ENCODE measurements at regions of chr9 and their contacts with region 1.

Region 1: GRCh38 chr9:74309654-74310053 is 187.5 kb upstream of the RORB start:
- DNase-seq: no peak
- ATAC-seq: no peak
- H3K4me3 ChIP-seq: no peak overlapping the region
- H3K27ac ChIP-seq: no peak overlapping the region
- H3K4me1 ChIP-seq: no peaks in the 10 kb centered on the region
- H3K27me3 ChIP-seq: no peaks in the 10 kb centered on the region
- CTCF ChIP-seq: peak in 5 of 9 donors; percentile 11 to 35 (median 22)

Region 2: GRCh38 chr9:74570879-74571512 is 261.3 kb after region 1 on chr9:
- intact Hi-C with region 1: loop called in 3 of 10 experiments (anchors 2 to 10 kb)
- DNase-seq: no peak
- ATAC-seq: no peak
- H3K4me3 ChIP-seq: no peak overlapping the region
- H3K27ac ChIP-seq: no peak overlapping the region
- H3K4me1 ChIP-seq: peaks cover 0 to 4% (median 0%) of the 10 kb centered on the region in 9 donors
- H3K27me3 ChIP-seq: no peaks in the 10 kb centered on the region
- CTCF ChIP-seq: peak; percentile 41 to 72 (median 61)

Region 3: GRCh38 chr9:74577956-74578355 is 268.3 kb after region 1 on chr9:
- intact Hi-C with region 1: loop called in 2 of 10 experiments (anchors 5 to 10 kb)
- DNase-seq: no peak
- ATAC-seq: no peak
- H3K4me3 ChIP-seq: no peak overlapping the region
- H3K27ac ChIP-seq: no peak overlapping the region
- H3K4me1 ChIP-seq: peaks cover 0 to 4% (median 0%) of the 10 kb centered on the region in 9 donors
- H3K27me3 ChIP-seq: no peaks in the 10 kb centered on the region
- CTCF ChIP-seq: peak in 2 of 9 donors; percentile 3 to 8

Region 4: DNA sequence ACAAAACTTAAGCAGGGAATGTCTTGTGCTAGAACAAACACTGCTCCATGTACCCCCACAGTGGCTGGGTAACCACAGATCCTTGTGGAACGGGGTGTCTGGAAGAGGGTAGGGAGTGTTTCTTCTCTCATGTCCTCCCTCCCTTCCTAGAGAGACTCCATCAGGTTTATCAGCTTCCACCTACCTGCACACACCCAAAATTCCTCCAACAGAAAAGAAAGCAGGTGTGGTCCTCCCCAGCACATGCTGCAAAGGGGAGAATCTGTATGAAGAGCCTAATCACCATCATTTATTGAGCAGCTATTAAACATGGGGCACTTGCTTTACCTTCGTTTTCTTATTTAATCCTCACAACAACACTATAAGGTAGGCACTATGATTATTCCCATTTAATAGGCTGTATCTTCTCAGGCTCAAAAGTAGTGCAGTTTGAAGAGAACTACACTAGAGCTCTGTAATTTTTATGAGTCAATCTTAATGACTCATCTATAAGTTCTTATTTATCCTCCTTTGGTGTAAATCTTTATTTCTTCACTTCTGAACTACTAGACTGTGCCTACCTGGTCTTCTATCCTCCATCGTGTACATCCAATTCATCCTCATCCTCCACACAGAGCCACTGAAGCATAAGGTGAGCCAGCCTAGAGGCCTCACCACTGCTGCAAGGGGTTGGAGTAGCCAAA is 611.4 kb after region 1 on chr9:
- intact Hi-C with region 1: no loop called
- DNase-seq: no peak
- ATAC-seq: no peak
- H3K4me3 ChIP-seq: no peak overlapping the region
- H3K27ac ChIP-seq: no peak overlapping the region
- H3K4me1 ChIP-seq: no peaks in the 10 kb centered on the region
- H3K27me3 ChIP-seq: no peaks in the 10 kb centered on the region
- CTCF ChIP-seq: no peak

Measured in heart right ventricle (tissue), 16 donors.